GM12878 (cell line): ENCODE measurements at regions of chr19 and their contacts with region 1.

Region 1: GRCh38 chr19:50461066-50461875 is 15.0 kb upstream of the EMC10 start:
- DNase-seq: peak; percentile 53
- ATAC-seq: peak; percentile 86
- H3K4me3 ChIP-seq: no peak overlapping the region
- H3K27ac ChIP-seq: peak overlapping the region; percentile 73; the same call in 1 of the 2 replicates
- H3K4me1 ChIP-seq: peaks cover 20% of the 10 kb centered on the region
- H3K27me3 ChIP-seq: no peaks in the 10 kb centered on the region
- CTCF ChIP-seq: peak; percentile 92 to 95 (median 92)
- EP300 ChIP-seq: no peak
- POLR2A ChIP-seq: no peak
- RAD21 ChIP-seq: peak; percentile 92

Region 2: DNA sequence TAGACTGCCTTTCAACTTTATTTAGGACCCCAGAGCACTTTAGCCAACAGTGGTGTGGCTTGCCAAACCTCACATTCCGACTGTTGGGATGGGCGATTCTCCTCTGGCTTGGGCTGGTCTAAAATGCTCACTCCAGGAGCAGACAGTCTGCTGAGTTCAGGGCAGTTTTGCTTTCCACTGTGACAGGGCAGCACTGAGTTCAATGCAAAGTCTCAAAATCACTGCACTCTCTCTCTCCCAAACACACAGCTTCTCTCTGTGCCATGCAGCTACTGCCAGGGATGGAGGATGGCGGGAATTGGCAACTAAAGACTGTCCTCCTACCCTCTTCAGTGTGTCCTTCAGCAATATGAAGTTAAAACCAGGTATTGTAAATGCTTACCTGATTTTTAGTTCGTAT is 109.0 kb before region 1 on chr19:
- CTCF ChIA-PET with region 1: interaction called, 120 read pairs
- POLR2A ChIA-PET with region 1: interaction called, 9 read pairs
- RAD21 ChIA-PET with region 1: interaction called, 72 read pairs
- SMC1A ChIA-PET with region 1: interaction called, 68 read pairs
- in situ Hi-C with region 1: no loop called
- intact Hi-C with region 1: loop called (anchors 1 kb)
- DNase-seq: no peak
- ATAC-seq: no peak
- H3K4me3 ChIP-seq: no peak overlapping the region
- H3K27ac ChIP-seq: no peak overlapping the region
- H3K4me1 ChIP-seq: peaks cover 29% of the 10 kb centered on the region
- H3K27me3 ChIP-seq: no peaks in the 10 kb centered on the region
- CTCF ChIP-seq: no peak
- EP300 ChIP-seq: no peak
- POLR2A ChIP-seq: no peak
- RAD21 ChIP-seq: no peak

Region 3: GRCh38 chr19:50368649-50369570 is 92.4 kb before region 1 on chr19:
- CTCF ChIA-PET with region 1: interaction called, 167 read pairs
- POLR2A ChIA-PET with region 1: interaction called, 35 read pairs
- RAD21 ChIA-PET with region 1: interaction called, 60 read pairs
- SMC1A ChIA-PET with region 1: interaction called, 33 read pairs
- in situ Hi-C with region 1: loop called (anchors 5 kb)
- intact Hi-C with region 1: loop called (anchors 1 kb)
- DNase-seq: peak; percentile 78
- ATAC-seq: peak; percentile 86
- H3K4me3 ChIP-seq: peak overlapping the region; percentile 93
- H3K27ac ChIP-seq: peak overlapping the region; percentile 82
- H3K4me1 ChIP-seq: peaks cover 19% of the 10 kb centered on the region
- H3K27me3 ChIP-seq: no peaks in the 10 kb centered on the region
- CTCF ChIP-seq: peak; percentile 79 to 81 (median 79)
- EP300 ChIP-seq: no peak
- POLR2A ChIP-seq: peak; percentile 69
- RAD21 ChIP-seq: peak; percentile 77

Region 4: DNA sequence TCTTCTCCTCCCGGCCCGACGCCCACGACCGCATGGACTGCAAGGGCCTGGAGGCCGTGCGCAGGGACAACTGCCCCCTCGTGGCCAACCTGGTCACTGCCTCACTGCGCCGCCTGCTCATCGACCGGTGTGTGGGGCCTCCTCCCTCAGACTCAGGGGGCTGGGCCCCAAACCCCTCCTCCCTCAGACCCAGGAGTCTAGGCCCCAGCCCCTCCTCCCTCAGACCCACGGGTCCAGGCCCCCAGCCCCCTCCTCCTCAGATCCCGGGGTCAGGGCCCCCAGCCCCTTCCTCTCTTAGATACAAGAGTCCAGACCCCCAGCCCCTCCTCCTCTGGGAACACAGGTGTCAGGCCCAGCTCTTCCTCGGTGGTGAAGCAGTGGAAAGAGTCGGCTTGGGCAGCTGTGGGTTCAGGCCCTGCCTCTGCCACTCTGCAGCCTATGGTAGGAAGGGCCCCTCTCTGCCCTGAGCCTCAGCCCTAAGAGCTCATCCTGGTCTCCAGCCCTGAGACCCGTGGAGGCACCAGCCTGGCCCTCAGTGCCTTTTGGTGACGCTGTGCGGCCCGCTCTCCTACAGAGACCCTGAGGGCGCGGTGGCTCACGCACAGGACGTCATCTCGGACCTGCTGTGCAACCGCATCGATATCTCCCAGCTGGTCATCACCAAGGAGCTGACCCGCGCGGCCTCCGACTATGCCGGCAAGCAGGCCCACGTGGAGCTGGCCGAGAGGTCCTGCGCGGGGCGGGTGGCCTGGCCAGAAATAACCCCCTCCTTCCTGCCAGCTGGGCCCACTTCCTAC is 46.2 kb before region 1 on chr19:
- CTCF ChIA-PET with region 1: interaction called, 30 read pairs
- POLR2A ChIA-PET with region 1: interaction called, 12 read pairs
- RAD21 ChIA-PET with region 1: interaction called, 15 read pairs
- SMC1A ChIA-PET with region 1: interaction called, 15 read pairs
- in situ Hi-C with region 1: no loop called
- intact Hi-C with region 1: loop called (anchors 2 kb)
- DNase-seq: no peak
- ATAC-seq: peak; percentile 68
- H3K4me3 ChIP-seq: peak overlapping the region; percentile 22
- H3K27ac ChIP-seq: peak overlapping the region; percentile 95
- H3K4me1 ChIP-seq: peaks cover 35% of the 10 kb centered on the region
- H3K27me3 ChIP-seq: no peaks in the 10 kb centered on the region
- CTCF ChIP-seq: peak; percentile 85 to 94 (median 89)
- EP300 ChIP-seq: no peak
- POLR2A ChIP-seq: peak; percentile 73; the same call in 1 of the 2 replicates
- RAD21 ChIP-seq: peak; percentile 64

Region 5: DNA sequence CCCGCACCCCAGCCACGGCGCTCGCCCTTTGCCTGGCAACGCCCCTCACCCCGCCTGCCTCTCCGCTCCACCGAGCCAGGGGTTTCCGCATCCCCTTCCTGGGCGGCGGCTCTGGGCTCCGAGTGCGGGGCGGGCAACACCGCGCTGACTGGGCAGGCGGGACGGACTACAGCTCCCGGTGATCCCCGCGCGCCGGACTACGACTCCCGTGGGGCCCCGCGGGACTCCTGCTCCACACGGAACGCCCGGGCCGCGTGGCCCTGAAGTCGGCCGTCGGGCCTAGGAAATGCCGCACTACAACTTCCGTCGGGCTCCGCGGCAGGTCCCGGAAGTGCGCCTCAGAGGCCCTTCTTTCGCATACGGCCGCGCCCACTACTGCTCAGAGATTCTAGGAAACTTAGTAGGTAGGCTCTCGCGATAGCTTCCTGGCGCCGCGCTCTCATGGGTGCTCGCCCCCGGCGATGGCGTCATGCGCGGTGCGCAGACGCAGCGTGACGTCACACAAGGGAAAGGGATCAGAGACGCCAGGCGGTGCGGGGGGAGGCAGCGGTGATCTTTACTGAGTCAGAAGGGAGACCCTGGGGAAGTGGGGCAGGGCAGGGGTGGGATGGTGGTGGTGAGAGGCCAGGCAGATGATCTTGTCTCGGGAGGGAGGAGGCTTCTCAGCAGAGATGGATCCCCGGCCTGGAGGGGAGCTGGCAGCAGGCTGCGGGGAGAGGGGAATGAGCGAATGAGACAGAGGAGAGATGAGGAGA is 50.0 kb after region 1 on chr19 and contains the start of gene JOSD2:
- CTCF ChIA-PET with region 1: interaction called, 10 read pairs
- POLR2A ChIA-PET with region 1: no interaction called
- RAD21 ChIA-PET with region 1: interaction called, 4 read pairs
- SMC1A ChIA-PET with region 1: no interaction called
- in situ Hi-C with region 1: no loop called
- intact Hi-C with region 1: no loop called
- DNase-seq: peak; percentile 94
- ATAC-seq: peak; percentile 98
- H3K4me3 ChIP-seq: peak within 1 kb of the TSS; percentile 81
- H3K27ac ChIP-seq: peak within 1 kb of the TSS; percentile 67
- H3K4me1 ChIP-seq: peaks cover 3% of the 10 kb centered on the region; the same call in 1 of the 2 replicates
- H3K27me3 ChIP-seq: no peaks in the 10 kb centered on the region
- CTCF ChIP-seq: no peak
- EP300 ChIP-seq: peak in 1 of 2 experiments; percentile 53; a peak in 3 of 4 replicates
- POLR2A ChIP-seq: peak; percentile 76
- RAD21 ChIP-seq: no peak
- polyA plus RNA-seq, gene JOSD2: 1.0 to 1.6 TPM